Mammary epithelial cell (primary cell): ENCODE measurements at regions of chr10 and their contacts with region 1.

Region 1: DNA sequence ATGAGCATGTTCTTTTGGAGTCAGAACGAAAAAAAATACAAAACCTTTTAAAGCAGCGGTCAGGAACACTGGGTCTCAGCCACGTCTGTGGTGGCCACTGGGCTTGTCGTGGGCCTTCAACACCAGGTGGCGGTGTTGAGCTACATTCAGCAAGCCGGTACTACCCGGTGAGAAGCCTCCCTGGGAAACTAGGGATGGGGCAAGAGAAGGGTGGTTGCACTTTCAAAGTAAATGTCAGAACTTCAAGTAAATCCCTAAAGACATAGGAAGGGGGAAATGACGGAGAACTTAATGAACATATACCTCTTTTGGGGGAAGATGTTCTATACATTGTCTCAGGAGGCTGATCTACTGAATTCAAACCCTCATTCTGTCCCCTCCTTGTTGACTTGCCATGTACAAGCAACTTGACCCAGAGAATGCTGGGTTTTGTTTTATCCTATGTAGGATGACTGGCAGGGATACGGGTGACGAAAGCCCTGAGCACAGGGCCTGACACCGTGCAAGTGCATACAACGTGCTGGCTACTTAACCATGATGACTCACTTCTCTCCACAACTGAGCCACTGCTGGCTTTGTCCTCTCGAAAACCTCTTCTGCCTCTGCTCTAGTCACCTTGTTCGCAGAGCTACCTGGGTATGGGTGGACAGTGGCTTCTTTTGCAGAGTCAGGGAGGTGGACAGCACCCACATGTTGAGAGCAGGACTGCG is 49.0 kb upstream of the BAMBI start:
- DNase-seq: peak; percentile 67
- H3K4me3 ChIP-seq: no peak overlapping the region
- H3K27ac ChIP-seq: no peak overlapping the region
- H3K4me1 ChIP-seq: peaks cover 9% of the 10 kb centered on the region
- H3K27me3 ChIP-seq: no peaks in the 10 kb centered on the region
- CTCF ChIP-seq: peak; percentile 89

Region 2: GRCh38 chr10:28663576-28664313 is 35.4 kb after region 1 on chr10:
- CTCF ChIA-PET with region 1: no interaction called
- dilution Hi-C with region 1: no loop called
- in situ Hi-C with region 1: no loop called
- intact Hi-C with region 1: loop called (anchors 1 kb)
- DNase-seq: peak; percentile 59
- H3K4me3 ChIP-seq: no peak overlapping the region
- H3K27ac ChIP-seq: no peak overlapping the region
- H3K4me1 ChIP-seq: peaks cover 11% of the 10 kb centered on the region
- H3K27me3 ChIP-seq: peaks cover 2% of the 10 kb centered on the region
- CTCF ChIP-seq: peak; percentile 98 to 99

Region 3: DNA sequence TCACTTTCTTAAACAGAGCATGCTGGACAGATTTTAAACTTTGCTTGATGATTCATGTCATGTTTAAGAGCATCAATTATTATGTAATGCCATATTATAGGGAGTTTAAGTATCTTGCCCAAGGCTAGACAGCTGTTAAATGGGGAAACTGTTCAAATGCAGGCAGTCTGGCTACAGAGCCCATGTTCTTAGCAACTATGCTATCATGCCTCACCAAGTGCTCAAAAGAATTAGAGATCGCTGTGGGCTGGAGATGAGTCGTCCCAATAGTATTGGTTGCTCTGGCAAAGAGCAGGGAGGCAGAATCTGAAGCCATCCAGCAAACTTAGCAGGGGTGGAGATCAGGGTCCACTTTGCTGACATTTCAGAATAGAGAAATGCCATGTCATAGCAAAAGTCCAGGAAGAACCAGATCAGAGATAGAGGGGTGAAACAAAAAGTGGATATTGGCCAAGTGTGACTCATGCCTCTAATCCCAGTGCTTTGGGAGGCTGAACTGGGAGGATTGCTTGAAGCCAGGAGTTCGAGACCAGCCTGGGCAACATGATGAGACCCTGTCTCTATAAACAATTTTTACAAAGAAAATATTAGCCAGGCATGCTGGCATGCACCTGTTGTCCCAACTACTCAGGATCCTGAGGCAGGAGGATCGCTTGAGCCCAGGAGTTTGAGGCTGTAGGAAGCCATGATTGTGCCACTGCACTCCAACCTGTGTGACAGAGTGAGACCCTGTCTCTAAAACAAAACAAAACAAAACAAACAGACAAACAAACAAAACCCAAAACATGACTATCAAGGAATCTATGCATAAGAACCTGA is 106.8 kb after region 1 on chr10:
- CTCF ChIA-PET with region 1: no interaction called
- dilution Hi-C with region 1: no loop called
- in situ Hi-C with region 1: no loop called
- intact Hi-C with region 1: no loop called
- DNase-seq: peak; percentile 83
- H3K4me3 ChIP-seq: no peak overlapping the region
- H3K27ac ChIP-seq: no peak overlapping the region
- H3K4me1 ChIP-seq: no peaks in the 10 kb centered on the region
- H3K27me3 ChIP-seq: peaks cover 2% of the 10 kb centered on the region
- CTCF ChIP-seq: no peak

Region 4: DNA sequence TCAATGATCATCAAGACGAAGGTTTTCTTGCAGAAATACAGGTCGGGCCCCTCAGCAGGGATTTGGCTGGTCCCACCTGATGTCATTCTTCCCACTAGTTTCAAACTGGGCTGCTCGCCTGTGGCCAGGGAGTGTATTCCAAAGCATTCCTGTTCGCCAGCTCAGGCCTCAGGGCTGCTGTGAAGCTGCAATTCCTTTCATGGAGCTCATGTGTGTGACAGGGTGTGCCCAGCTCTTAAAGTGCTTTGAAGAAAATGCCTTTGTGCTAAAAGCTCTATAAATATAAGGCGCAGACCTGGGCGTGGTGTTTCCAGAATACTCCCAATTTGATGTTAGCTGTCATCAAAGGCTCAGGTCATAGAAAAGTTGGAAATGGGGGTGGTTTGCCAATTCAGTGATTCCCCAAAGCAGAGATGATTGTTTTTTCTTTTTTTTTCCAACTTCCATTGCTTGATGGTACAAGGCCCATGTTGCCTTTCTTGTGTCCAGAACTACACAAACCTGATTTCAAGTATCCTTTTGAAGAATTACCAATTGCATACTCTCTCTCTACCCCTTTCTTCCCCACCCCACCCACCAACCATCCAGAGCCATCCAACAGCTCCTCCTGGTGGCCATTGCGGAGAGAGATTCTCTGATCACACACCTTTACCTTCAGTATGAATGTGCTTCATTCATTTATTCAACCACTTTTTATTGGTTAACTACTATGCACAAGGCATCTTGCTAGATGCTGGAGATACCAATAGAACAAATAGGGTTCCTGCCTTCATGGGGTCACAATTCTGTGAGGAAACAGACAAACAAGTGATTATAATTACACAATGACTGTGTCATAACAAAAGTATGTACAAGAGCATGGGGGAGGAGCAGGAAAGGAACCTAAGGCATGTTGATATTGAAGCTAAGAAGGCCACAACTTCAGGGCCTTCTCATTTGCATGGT is 363.3 kb after region 1 on chr10:
- CTCF ChIA-PET with region 1: no interaction called
- dilution Hi-C with region 1: no loop called
- in situ Hi-C with region 1: no loop called
- intact Hi-C with region 1: loop called (anchors 1 kb)
- DNase-seq: peak; percentile 56
- H3K4me3 ChIP-seq: no peak overlapping the region
- H3K27ac ChIP-seq: no peak overlapping the region
- H3K4me1 ChIP-seq: peaks cover 17% of the 10 kb centered on the region
- H3K27me3 ChIP-seq: no peaks in the 10 kb centered on the region
- CTCF ChIP-seq: peak; percentile 82

Region 5: GRCh38 chr10:29297678-29298077 is 669.3 kb after region 1 on chr10:
- CTCF ChIA-PET with region 1: no interaction called
- dilution Hi-C with region 1: no loop called
- in situ Hi-C with region 1: loop called in 1 of 2 experiments (anchors 10 kb)
- intact Hi-C with region 1: no loop called
- DNase-seq: no peak
- H3K4me3 ChIP-seq: no peak overlapping the region
- H3K27ac ChIP-seq: no peak overlapping the region
- H3K4me1 ChIP-seq: no peaks in the 10 kb centered on the region
- H3K27me3 ChIP-seq: peaks cover 5% of the 10 kb centered on the region
- CTCF ChIP-seq: no peak

Region 6: GRCh38 chr10:29517352-29517923 is 889.1 kb after region 1 on chr10:
- CTCF ChIA-PET with region 1: no interaction called
- dilution Hi-C with region 1: no loop called
- in situ Hi-C with region 1: no loop called
- intact Hi-C with region 1: loop called (anchors 2 kb)
- DNase-seq: no peak
- H3K4me3 ChIP-seq: no peak overlapping the region
- H3K27ac ChIP-seq: no peak overlapping the region
- H3K4me1 ChIP-seq: peaks cover 4% of the 10 kb centered on the region
- H3K27me3 ChIP-seq: no peaks in the 10 kb centered on the region
- CTCF ChIP-seq: peak; percentile 52 to 54